ENCODE measurements at regions of chr16 and their contacts with region 1.

Region 1: DNA sequence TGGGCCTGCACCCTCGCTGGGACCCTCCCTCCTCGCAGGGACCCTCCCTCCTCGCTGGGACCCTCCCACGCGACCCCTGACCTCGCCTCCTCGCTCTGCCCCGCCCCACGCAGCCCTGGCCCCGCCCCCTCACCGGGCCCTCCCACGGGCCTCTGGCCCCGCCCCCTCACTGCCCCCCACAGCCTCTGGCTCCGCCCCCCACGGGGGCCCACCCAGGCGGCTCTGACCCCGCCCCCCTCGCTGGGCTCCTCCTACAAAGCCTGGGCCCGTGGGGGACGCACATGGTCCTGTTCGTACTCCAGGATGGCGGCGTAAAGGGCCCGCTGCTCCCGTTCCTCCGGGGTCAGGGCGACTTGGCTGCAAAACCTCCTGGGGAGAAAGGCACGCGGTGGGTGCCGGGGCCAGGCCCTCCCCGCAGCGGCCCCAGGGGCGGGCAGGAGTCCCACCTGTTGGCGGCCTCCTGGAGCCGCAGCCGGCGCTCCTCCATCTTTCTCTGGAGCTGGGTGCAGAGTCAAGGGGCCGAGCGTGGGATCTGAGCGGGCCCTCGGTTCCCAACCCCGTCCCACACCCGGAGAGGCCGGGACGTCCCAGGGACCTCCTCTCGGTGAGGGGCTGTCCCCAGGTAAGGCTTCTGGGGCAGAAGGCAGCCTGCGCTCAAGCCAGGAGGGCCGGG is 9.0 kb downstream of the VPS9D1 start:
- DNase-seq: peak; percentile 44 to 72
- H3K4me3 ChIP-seq: peak overlapping the region; percentile 98
- H3K27ac ChIP-seq: no peak overlapping the region
- H3K4me1 ChIP-seq: peaks cover 4% of the 10 kb centered on the region; the same call in 1 of the 2 replicates
- H3K27me3 ChIP-seq: no peaks in the 10 kb centered on the region
- CTCF ChIP-seq: no peak

Region 2: GRCh38 chr16:89574681-89575246 is 137.0 kb before region 1 on chr16:
- CTCF ChIA-PET with region 1: no interaction called
- POLR2A ChIA-PET with region 1: no interaction called
- intact Hi-C with region 1: no loop called
- DNase-seq: peak; percentile 46 to 86
- H3K4me3 ChIP-seq: peak overlapping the region; percentile 76
- H3K27ac ChIP-seq: no peak overlapping the region
- H3K4me1 ChIP-seq: peaks cover 7% of the 10 kb centered on the region; the same call in 1 of the 2 replicates
- H3K27me3 ChIP-seq: no peaks in the 10 kb centered on the region
- CTCF ChIP-seq: peak; percentile 65; the same call in 1 of the 2 replicates

Region 3: DNA sequence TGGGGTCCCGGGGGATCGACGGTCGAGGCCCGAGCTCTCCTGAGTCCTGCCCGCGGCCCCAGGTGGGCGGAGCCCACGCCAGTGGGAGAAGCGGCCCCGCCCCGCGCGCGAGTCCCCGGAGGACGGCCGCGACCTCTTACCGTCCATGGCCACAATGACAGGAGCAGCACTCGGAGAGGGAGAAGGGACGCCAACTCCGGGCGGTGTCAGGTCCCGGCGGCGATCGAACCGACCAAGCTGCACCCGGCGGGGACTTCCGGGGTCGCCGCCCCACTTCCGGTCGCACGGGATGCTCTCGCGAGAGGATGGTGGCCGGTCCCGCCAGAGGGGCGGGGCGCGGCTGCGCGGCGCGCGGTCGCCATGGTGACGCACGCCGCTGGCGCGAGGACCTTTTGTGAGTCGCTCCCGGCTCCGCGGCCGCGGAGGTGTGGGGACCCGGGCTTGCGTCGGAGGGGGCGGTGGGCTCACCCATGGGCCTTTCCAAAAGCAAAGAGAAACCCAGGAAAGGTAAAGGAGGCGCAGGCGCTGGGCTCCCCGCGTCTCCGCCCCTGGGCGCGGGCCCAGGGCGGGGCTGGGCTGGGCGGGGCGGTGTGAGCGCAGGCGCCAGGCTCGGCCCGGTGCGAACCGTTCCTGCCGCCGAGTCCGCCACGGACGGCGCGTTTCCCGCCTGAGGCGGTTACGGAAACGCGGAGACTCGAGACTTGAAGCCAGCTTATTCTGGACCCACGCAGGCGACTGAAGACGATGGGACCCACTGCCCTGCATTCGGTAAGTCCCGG is 54.1 kb before region 1 on chr16 and contains the starts of genes CHMP1A and SPATA33:
- CTCF ChIA-PET with region 1: interaction called, 3 read pairs
- POLR2A ChIA-PET with region 1: interaction called, 10 read pairs
- intact Hi-C with region 1: no loop called
- DNase-seq: peak; percentile 66 to 95
- H3K4me3 ChIP-seq: peak within 1 kb of the TSS; percentile 93
- H3K27ac ChIP-seq: no peak within 1 kb of the TSS
- H3K4me1 ChIP-seq: peaks cover 18% of the 10 kb centered on the region
- H3K27me3 ChIP-seq: no peaks in the 10 kb centered on the region
- CTCF ChIP-seq: no peak
- total RNA-seq, gene CHMP1A: 151 and 237 TPM in 2 replicates
- total RNA-seq, gene SPATA33: 21.0 and 25.6 TPM in 2 replicates